KBM-7 (cell line): ENCODE measurements at regions of chrX and their contacts with region 1.

Region 1: DNA sequence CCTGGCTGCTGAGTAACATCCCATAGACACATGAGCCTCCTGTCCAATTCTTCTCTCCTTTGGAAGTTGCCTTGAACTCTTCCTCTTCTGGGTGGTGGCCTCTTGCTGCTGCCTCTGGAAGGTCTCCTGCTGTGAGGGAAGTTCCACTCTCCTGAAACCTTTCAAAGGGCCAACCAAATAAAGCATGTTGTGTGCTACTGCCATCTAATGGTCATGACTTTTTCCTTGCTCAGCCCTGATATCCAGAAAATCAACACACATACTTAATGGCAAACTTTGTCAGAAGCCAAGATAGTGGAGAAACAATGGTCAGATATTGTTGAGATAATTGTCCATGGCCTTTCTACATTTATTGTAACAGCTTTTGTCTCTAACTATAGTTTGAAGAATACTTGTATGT is 19.1 kb upstream of the ZXDA start:
- DNase-seq: peak; percentile 82

Region 2: GRCh38 chrX:57528670-57529255 is 400.6 kb before region 1 on chrX:
- in situ Hi-C with region 1: no loop called
- DNase-seq: peak; percentile 47

Region 3: DNA sequence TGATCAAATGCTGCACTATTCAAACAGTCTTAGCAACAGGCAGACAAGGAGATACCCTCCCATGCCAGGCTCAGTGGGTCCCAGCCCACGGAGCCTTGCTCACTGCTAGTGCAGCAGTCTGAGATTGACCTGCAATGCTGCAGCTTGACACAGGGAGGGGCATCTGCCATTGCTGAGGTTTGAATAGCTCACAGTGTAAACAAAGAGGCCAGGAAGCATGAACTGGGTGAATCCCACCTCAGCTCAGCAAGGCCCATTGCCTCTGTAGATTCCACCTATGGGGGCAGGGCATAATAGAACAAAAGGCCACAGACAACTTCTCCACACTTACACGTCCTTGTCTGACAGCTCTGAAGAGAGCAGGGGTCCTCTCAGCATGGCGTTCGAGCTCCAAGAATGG is 364.2 kb before region 1 on chrX:
- in situ Hi-C with region 1: no loop called
- DNase-seq: no peak

Region 4: DNA sequence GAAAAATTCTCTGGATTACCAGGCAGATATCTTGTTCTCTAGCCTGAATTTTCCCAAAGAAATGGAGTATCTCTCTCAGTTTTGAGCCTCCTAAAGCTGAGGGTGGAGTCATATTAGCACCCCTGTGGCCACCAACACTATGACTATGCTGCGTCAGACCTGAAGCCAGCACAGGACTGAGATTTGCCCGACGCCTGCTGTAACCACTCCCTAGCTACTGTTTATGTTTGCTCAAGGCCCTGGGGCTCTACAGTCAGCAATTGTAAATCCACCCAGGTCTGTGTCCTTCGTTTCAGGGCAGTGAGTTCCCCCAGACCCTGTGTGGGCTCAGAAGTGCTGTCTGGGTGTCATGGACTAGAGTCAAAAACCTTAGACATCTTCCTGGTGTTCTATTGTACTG is 80.5 kb before region 1 on chrX:
- in situ Hi-C with region 1: loop called (anchors 25 kb)
- DNase-seq: no peak

Region 5: GRCh38 chrX:58025979-58026378 is 96.6 kb after region 1 on chrX:
- in situ Hi-C with region 1: no loop called
- DNase-seq: peak; percentile 72